A549 (cell line): ENCODE measurements at regions of chr15 and their contacts with region 1.

Region 1: DNA sequence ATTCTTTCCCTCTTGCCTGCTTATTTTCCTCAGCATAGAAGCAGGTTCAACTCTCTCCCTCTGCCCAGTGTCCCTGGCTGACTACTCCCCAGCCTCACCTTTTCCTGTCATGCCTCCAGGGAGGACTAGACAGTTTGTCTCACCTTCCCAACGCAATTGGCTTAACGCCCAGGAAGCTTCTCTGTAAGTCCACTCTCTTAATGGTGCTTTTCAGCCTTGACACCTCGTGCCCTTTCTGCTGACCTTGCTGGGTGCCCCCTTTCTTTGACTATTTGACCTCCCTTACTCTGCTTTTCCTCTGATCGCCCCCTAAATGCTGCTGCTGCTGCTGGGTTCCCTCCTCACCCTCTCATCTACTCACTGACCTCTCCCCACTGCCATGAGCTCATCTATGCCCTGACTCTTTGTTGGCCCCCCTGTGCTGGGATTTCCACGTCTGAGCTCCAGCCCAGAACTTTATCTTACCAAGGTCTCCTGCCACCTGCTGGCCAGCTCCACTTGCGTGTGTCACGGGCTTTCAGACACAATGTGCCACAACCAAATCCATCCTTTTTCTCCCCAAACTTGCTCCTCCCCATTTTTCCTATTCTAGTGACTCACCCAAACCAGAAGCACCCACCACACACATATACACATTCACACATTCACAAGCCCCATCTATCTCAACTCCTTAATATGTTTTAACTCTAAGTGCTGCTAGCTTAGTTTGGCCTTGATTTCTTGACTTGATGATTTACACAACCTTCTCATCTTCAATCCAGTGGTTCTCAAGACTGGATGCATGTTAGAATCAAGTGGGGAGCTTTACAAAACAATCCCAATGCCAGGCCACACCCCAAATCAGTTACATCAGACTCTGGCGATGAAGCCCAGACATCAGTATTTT is 16.6 kb downstream of the EPB42 start:
- DNase-seq: peak; percentile 38 to 50
- ATAC-seq: peak; percentile 75 to 82
- H3K4me3 ChIP-seq: no peak overlapping the region
- H3K27ac ChIP-seq: no peak overlapping the region
- H3K4me1 ChIP-seq: no peaks in the 10 kb centered on the region
- CTCF ChIP-seq: peak; percentile 50
- EP300 ChIP-seq: no peak
- POLR2A ChIP-seq: no peak
- RAD21 ChIP-seq: peak; percentile 24 to 32; a peak in 3 of 5 replicates

Region 2: GRCh38 chr15:42784705-42785104 is 419.6 kb before region 1 on chr15:
- CTCF ChIA-PET with region 1: no interaction called
- POLR2A ChIA-PET with region 1: no interaction called
- DNase-seq: no peak
- ATAC-seq: no peak
- H3K4me3 ChIP-seq: no peak overlapping the region
- H3K27ac ChIP-seq: no peak overlapping the region
- H3K4me1 ChIP-seq: no peaks in the 10 kb centered on the region
- CTCF ChIP-seq: no peak
- EP300 ChIP-seq: no peak
- POLR2A ChIP-seq: no peak
- RAD21 ChIP-seq: no peak

Region 3: GRCh38 chr15:43185157-43186017 is 18.9 kb before region 1 on chr15 and contains the start of gene CCNDBP1:
- CTCF ChIA-PET with region 1: interaction called, 19 read pairs
- POLR2A ChIA-PET with region 1: interaction called, 3 read pairs
- DNase-seq: peak; percentile 91 to 93
- ATAC-seq: peak; percentile 97 to 100
- H3K4me3 ChIP-seq: peak within 1 kb of the TSS; percentile 73
- H3K27ac ChIP-seq: peak within 1 kb of the TSS; percentile 84 to 95
- H3K4me1 ChIP-seq: peaks cover 6% of the 10 kb centered on the region; the same call in 2 of the 3 replicates
- CTCF ChIP-seq: peak; percentile 16; the same call in 1 of the 3 replicates
- EP300 ChIP-seq: no peak
- POLR2A ChIP-seq: peak; percentile 77
- RAD21 ChIP-seq: no peak
- polyA plus RNA-seq, gene CCNDBP1: 44.1 and 44.8 TPM in 2 replicates

Region 4: DNA sequence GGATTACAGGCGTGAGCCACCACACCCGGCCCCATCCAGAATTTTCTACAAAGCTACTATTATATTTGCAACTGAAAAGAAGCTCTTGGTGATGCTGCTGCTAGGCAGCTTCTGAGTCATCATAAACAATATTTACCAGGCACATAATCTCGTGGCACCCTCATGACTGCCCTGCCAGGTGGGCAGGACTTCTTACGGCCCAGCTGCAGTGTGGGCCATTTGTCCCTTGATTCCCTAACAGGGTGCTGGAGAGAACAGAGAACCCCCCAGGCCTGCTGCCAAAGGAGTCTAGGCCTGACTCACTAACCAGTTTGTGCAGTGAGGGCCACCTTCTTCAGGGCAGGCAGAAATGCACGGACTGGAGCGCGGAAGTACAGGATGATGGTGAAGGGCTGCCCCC is 11.7 kb after region 1 on chr15:
- CTCF ChIA-PET with region 1: interaction called, 15 read pairs
- POLR2A ChIA-PET with region 1: no interaction called
- DNase-seq: peak in 1 of 2 experiments; percentile 25
- ATAC-seq: peak; percentile 40 to 60; a peak in 4 of 6 replicates
- H3K4me3 ChIP-seq: no peak overlapping the region
- H3K27ac ChIP-seq: no peak overlapping the region
- H3K4me1 ChIP-seq: no peaks in the 10 kb centered on the region
- CTCF ChIP-seq: no peak
- EP300 ChIP-seq: no peak
- POLR2A ChIP-seq: no peak
- RAD21 ChIP-seq: no peak

Region 5: DNA sequence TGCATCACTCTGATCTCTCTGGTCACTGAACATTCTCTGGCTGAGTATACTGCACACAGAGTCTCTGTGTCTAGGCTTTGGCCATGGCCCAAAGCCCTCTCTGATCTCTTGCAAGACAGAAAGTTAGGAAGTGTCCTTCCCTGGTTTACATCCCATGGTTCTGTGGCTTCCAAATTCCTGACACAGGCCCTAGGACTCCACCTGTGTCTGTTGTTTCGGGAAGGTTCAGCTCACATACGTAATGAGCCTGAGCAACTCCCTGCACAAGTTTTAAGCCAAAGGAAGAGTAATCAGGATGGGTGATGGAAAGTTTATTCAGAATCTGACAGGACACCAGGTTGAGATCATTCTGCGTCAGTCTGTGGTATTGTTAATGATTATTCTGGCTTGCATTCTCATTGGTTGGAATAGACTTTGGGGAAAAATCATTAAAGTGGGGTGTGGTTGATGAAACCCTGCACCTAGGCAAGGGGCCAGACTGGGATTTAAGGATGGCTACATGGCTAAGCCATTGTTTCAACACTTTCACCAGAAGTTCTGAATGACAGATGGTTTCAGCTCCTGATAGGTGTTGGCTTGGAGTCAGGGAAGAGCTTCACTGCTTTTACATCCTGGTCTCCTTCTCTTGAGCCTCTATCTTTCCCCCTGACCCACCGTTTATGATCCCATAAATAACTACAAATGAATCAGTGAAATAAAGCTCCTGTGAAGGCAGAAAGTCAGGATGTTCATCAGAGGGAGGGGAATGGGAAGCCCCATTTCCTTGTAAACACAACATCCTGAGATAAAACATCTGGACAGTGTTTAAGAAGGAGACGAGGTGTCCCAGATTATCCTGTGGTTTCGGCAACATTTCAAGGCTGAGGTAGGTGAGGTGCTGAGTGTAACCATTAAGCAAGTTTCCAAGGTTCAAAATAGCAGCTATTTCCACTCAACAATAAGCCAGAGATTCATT is 112.0 kb after region 1 on chr15:
- CTCF ChIA-PET with region 1: no interaction called
- POLR2A ChIA-PET with region 1: no interaction called
- DNase-seq: no peak
- ATAC-seq: no peak
- H3K4me3 ChIP-seq: no peak overlapping the region
- H3K27ac ChIP-seq: no peak overlapping the region
- H3K4me1 ChIP-seq: no peaks in the 10 kb centered on the region
- CTCF ChIP-seq: no peak
- EP300 ChIP-seq: no peak
- POLR2A ChIP-seq: no peak
- RAD21 ChIP-seq: no peak

Region 6: GRCh38 chr15:43329960-43330779 is 125.9 kb after region 1 on chr15 and contains the start of gene LCMT2:
- CTCF ChIA-PET with region 1: no interaction called
- POLR2A ChIA-PET with region 1: no interaction called
- DNase-seq: peak; percentile 75 to 93
- ATAC-seq: peak; percentile 98 to 99
- H3K4me3 ChIP-seq: peak within 1 kb of the TSS; percentile 77
- H3K27ac ChIP-seq: peak within 1 kb of the TSS; percentile 90 to 91
- H3K4me1 ChIP-seq: peaks cover 15% of the 10 kb centered on the region; the same call in 1 of the 3 replicates
- CTCF ChIP-seq: no peak
- EP300 ChIP-seq: no peak
- POLR2A ChIP-seq: peak; percentile 70
- RAD21 ChIP-seq: no peak
- polyA plus RNA-seq, gene LCMT2: 9.7 and 12.8 TPM in 2 replicates

Region 7: GRCh38 chr15:43390723-43391122 is 186.5 kb after region 1 on chr15:
- CTCF ChIA-PET with region 1: no interaction called
- POLR2A ChIA-PET with region 1: no interaction called
- DNase-seq: no peak
- ATAC-seq: no peak
- H3K4me3 ChIP-seq: no peak overlapping the region
- H3K27ac ChIP-seq: no peak overlapping the region
- H3K4me1 ChIP-seq: no peaks in the 10 kb centered on the region
- CTCF ChIP-seq: no peak
- EP300 ChIP-seq: no peak
- POLR2A ChIP-seq: no peak
- RAD21 ChIP-seq: no peak